SK-N-SH (cell line): ENCODE measurements at regions of chr9 and their contacts with region 1.

Region 1: DNA sequence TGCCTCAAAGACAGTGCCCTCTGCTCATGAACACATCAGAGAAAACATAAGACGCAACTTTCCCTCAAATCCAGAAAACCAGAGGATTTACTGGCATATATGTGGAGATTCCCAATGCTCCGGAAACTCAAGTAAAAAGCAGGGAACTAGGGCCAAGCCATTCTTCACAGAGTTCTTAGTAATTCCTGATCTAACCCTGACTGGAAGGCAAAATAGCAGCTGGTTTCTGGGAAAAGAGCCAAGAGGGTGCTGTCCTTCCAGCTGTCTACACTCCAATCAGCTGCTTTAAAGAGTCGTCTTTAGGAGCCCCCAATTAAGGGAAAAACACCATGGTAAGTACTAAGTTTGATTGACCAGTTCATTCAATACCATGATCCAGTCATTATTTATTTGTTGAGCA is 49.6 kb downstream of the GNA14 start:
- DNase-seq: no peak
- H3K4me3 ChIP-seq: no peak overlapping the region
- H3K27ac ChIP-seq: peak overlapping the region in 1 of 2 experiments; percentile 62; a peak in 2 of 4 replicates
- H3K4me1 ChIP-seq: peaks cover 24 to 33% of the 10 kb centered on the region in 2 experiments; a peak in 3 of 4 replicates
- H3K27me3 ChIP-seq: no peaks in the 10 kb centered on the region
- CTCF ChIP-seq: no peak
- EP300 ChIP-seq: no peak
- RAD21 ChIP-seq: no peak

Region 2: GRCh38 chr9:77616191-77616590 is 17.7 kb after region 1 on chr9:
- CTCF ChIA-PET with region 1: interaction called, 13 read pairs
- POLR2A ChIA-PET with region 1: no interaction called
- DNase-seq: no peak
- H3K4me3 ChIP-seq: no peak overlapping the region
- H3K27ac ChIP-seq: no peak overlapping the region
- H3K4me1 ChIP-seq: no peaks in the 10 kb centered on the region
- H3K27me3 ChIP-seq: no peaks in the 10 kb centered on the region
- CTCF ChIP-seq: no peak
- EP300 ChIP-seq: no peak
- RAD21 ChIP-seq: no peak

Region 3: GRCh38 chr9:77827104-77827784 is 228.7 kb after region 1 on chr9:
- CTCF ChIA-PET with region 1: no interaction called
- POLR2A ChIA-PET with region 1: no interaction called
- DNase-seq: no peak
- H3K4me3 ChIP-seq: no peak overlapping the region
- H3K27ac ChIP-seq: peak overlapping the region; percentile 6 to 23; a peak in 2 of 4 replicates
- H3K4me1 ChIP-seq: peaks cover 9 to 10% of the 10 kb centered on the region in 2 experiments; a peak in 3 of 4 replicates
- H3K27me3 ChIP-seq: no peaks in the 10 kb centered on the region
- CTCF ChIP-seq: no peak
- EP300 ChIP-seq: no peak
- RAD21 ChIP-seq: no peak